ENCODE measurements at regions of chrX and their contacts with region 1.

Region 1: DNA sequence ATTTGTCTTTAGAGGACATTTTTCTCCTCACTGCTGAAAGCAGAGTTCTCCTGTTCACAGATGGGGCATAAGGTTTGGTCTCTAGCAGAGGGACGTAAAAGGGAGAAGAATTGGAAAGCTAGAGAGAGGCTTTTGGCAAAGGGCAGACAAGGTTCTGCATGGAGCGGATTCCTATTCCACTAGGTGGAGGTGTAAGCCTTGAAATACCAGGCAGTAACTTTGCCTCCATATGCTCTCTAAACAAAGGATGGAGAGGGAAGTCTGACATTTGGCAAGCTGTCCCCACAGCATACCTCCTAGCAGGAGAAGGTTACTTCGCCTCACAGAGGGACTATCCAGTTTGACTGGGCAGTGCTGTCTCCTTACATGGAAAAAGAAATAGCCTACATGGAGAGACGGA is 174.7 kb downstream of the DACH2 start:
- DNase-seq: peak; percentile 59 to 67
- H3K4me3 ChIP-seq: no peak overlapping the region
- H3K4me1 ChIP-seq: peaks cover 5% of the 10 kb centered on the region; the same call in 1 of the 2 replicates
- H3K27me3 ChIP-seq: no peaks in the 10 kb centered on the region

Region 2: DNA sequence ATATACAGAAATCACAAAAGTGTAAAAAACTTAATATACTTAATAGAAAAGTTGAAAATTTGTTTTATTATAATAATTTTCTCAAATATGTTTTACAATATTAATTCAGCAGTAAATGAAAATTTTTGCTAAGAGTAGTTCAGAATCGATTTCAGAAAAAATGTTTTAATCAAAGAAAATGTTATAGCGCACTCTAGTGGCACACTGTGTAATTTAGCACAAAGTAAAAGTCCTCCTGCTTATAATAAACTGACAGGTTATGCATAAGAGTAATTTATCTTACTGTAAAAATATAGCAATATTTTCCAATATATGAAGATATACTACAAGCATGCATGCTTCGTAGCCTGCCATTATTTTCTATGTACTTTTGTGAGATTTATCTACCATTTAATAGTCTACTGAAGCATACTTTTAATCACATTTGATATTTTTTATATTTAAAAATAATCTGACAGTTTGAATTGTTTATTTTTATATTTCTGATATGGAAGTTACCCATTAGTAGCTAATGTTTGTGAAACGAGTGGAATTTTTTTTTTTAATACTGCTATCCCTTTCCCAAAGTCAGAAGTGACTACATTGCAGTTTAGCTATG is 976.7 kb after region 1 on chrX:
- in situ Hi-C with region 1: loop called (anchors 25 kb)
- DNase-seq: peak; percentile 29 to 44
- H3K4me3 ChIP-seq: no peak overlapping the region
- H3K4me1 ChIP-seq: peaks cover 2% of the 10 kb centered on the region; the same call in 1 of the 2 replicates
- H3K27me3 ChIP-seq: no peaks in the 10 kb centered on the region